Naive thymus-derived CD4-positive, alpha-beta T cell (primary cell): ENCODE measurements at regions of chr10 and their contacts with region 1.

Region 1: GRCh38 chr10:3623746-3624145 is 161.3 kb downstream of the KLF6 start:
- DNase-seq: no peak
- ATAC-seq: no peak
- H3K4me3 ChIP-seq: no peak overlapping the region
- H3K4me3 Mint-ChIP-seq: no peak overlapping the region
- H3K27ac ChIP-seq: no peak overlapping the region
- H3K27ac Mint-ChIP-seq: no peak overlapping the region
- H3K4me1 ChIP-seq: peaks cover 0 to 4% of the 10 kb centered on the region in 2 donors
- H3K4me1 Mint-ChIP-seq: peaks cover 0 to 21% (median 7%) of the 10 kb centered on the region in 7 donors
- H3K27me3 ChIP-seq: no peaks in the 10 kb centered on the region
- H3K27me3 Mint-ChIP-seq: peaks cover 0 to 16% (median 9%) of the 10 kb centered on the region in 5 donors

Region 2: GRCh38 chr10:3365630-3366029 is 258.1 kb before region 1 on chr10:
- CTCF ChIA-PET with region 1: no interaction called
- POLR2A ChIA-PET with region 1: no interaction called
- intact Hi-C with region 1: no loop called
- DNase-seq: no peak
- ATAC-seq: no peak
- H3K4me3 ChIP-seq: no peak overlapping the region
- H3K4me3 Mint-ChIP-seq: no peak overlapping the region
- H3K27ac ChIP-seq: no peak overlapping the region
- H3K27ac Mint-ChIP-seq: no peak overlapping the region
- H3K4me1 ChIP-seq: no peaks in the 10 kb centered on the region
- H3K4me1 Mint-ChIP-seq: no peaks in the 10 kb centered on the region
- H3K27me3 ChIP-seq: no peaks in the 10 kb centered on the region
- H3K27me3 Mint-ChIP-seq: peaks cover 0 to 8% (median 4%) of the 10 kb centered on the region in 5 donors

Region 3: GRCh38 chr10:4669601-4670000 is 1045.9 kb after region 1 on chr10:
- CTCF ChIA-PET with region 1: no interaction called
- POLR2A ChIA-PET with region 1: no interaction called
- intact Hi-C with region 1: loop called in 1 of 2 experiments (anchors 5 kb)
- DNase-seq: no peak
- ATAC-seq: no peak
- H3K4me3 ChIP-seq: no peak overlapping the region
- H3K4me3 Mint-ChIP-seq: no peak overlapping the region
- H3K27ac ChIP-seq: no peak overlapping the region
- H3K27ac Mint-ChIP-seq: no peak overlapping the region
- H3K4me1 ChIP-seq: no peaks in the 10 kb centered on the region
- H3K4me1 Mint-ChIP-seq: no peaks in the 10 kb centered on the region
- H3K27me3 ChIP-seq: peaks cover 0 to 8% of the 10 kb centered on the region in 2 donors
- H3K27me3 Mint-ChIP-seq: peaks cover 13 to 38% (median 20%) of the 10 kb centered on the region in 5 donors